Common myeloid progenitor, CD34-positive (primary cell): ENCODE measurements at regions of chr19 and their contacts with region 1.

Region 1: DNA sequence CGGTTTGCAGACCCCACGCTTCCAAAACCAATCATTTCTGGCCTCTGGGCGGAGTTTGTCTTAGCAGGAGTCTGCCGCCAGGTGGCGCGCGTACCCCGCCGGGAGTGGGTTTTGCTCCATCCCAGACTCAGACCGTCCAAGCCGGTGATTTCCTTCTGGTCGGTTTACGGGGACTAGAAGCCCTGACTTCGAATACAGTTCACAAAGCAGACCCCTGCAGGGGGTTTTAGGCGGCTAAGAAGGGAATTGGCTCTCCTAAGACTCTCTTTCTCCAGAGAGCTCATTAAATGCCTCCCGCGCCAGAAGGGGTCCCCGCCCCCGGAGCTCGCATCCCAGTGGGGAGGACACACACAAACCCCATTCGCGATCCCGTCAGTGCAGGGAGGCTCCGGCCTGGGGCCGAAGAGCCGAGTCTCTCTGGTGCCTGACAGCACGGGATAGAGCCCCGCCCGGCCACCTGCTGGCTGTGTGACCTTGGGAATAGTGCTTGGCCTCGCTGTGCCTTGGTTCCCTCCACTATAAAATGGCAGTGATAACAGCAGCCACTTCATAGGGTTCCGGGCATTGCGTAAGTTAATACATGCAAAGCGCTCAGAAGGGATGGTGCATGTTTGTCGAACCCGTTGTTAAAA is 8.6 kb upstream of the NUP62 start:
- DNase-seq: peak; percentile 67 to 80 (median 70)
- H3K4me3 ChIP-seq: no peak overlapping the region
- H3K27ac ChIP-seq: no peak overlapping the region
- H3K4me1 ChIP-seq: peaks cover 0 to 7% (median 2%) of the 10 kb centered on the region in 4 experiments
- H3K27me3 ChIP-seq: peaks cover 0 to 11% (median 3%) of the 10 kb centered on the region in 5 experiments

Region 2: DNA sequence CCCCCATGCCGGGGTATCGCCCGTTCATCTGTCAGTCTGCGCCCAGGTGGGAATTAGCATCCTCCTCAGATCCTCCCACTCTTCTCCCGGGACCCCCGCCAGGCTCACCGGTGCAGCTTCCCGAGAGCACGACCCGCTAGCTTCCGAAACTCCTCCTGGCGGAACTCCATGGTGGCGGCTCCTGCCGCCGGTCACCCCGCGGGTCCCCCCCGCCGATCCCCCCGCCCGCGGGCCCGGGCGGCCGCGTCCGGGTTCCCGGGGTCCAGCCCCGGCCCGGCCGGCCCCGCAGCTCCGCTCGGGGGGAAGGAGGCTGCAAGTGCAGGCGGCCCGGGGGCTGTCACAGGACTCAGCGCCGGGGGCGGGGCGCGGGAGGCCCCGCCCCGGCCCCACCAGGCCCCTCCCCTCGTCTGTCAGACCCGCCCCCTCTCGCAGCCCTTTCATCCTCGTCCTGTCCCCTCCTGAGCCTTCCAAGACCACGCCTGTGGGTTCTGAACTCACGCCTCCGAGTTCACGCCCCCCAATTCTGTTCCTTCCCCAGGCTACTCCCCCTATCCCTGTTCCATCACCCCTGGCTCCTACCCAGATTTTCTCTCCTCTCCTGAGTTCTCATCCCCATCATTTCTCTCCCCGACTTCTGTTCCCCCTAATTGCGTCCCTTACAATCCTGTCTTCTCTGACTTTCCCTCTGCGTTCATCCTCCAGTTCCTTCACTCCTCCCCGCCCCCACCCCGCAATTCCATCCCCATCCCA is 496.5 kb before region 1 on chr19 and contains the start of gene SLC17A7:
- CTCF ChIA-PET with region 1: no interaction called
- POLR2A ChIA-PET with region 1: no interaction called
- DNase-seq: peak in 2 of 3 donors; percentile 47 to 50
- H3K4me3 ChIP-seq: peak within 1 kb of the TSS in 4 of 7 experiments; percentile 3 to 79 (median 49)
- H3K27ac ChIP-seq: no peak within 1 kb of the TSS
- H3K4me1 ChIP-seq: peaks cover 0 to 26% (median 16%) of the 10 kb centered on the region in 4 experiments
- H3K27me3 ChIP-seq: peaks cover 2 to 62% (median 41%) of the 10 kb centered on the region in 5 experiments

Region 3: GRCh38 chr19:49949744-49950589 is 12.1 kb after region 1 on chr19:
- CTCF ChIA-PET with region 1: interaction called, 20 read pairs
- POLR2A ChIA-PET with region 1: no interaction called
- DNase-seq: no peak
- H3K4me3 ChIP-seq: no peak overlapping the region
- H3K27ac ChIP-seq: no peak overlapping the region
- H3K4me1 ChIP-seq: peaks cover 6 to 20% (median 15%) of the 10 kb centered on the region in 4 experiments
- H3K27me3 ChIP-seq: peaks cover 0 to 7% (median 0%) of the 10 kb centered on the region in 5 experiments

Region 4: GRCh38 chr19:49983645-49984229 is 45.9 kb after region 1 on chr19:
- CTCF ChIA-PET with region 1: interaction called, 20 read pairs
- POLR2A ChIA-PET with region 1: no interaction called
- DNase-seq: peak; percentile 56 to 76 (median 63)
- H3K4me3 ChIP-seq: no peak overlapping the region
- H3K27ac ChIP-seq: no peak overlapping the region
- H3K4me1 ChIP-seq: peaks cover 0 to 2% (median 0%) of the 10 kb centered on the region in 4 experiments
- H3K27me3 ChIP-seq: no peaks in the 10 kb centered on the region